Sigmoid colon (tissue), 7 donors: ENCODE measurements at regions of chr11 and their contacts with region 1.

Region 1: DNA sequence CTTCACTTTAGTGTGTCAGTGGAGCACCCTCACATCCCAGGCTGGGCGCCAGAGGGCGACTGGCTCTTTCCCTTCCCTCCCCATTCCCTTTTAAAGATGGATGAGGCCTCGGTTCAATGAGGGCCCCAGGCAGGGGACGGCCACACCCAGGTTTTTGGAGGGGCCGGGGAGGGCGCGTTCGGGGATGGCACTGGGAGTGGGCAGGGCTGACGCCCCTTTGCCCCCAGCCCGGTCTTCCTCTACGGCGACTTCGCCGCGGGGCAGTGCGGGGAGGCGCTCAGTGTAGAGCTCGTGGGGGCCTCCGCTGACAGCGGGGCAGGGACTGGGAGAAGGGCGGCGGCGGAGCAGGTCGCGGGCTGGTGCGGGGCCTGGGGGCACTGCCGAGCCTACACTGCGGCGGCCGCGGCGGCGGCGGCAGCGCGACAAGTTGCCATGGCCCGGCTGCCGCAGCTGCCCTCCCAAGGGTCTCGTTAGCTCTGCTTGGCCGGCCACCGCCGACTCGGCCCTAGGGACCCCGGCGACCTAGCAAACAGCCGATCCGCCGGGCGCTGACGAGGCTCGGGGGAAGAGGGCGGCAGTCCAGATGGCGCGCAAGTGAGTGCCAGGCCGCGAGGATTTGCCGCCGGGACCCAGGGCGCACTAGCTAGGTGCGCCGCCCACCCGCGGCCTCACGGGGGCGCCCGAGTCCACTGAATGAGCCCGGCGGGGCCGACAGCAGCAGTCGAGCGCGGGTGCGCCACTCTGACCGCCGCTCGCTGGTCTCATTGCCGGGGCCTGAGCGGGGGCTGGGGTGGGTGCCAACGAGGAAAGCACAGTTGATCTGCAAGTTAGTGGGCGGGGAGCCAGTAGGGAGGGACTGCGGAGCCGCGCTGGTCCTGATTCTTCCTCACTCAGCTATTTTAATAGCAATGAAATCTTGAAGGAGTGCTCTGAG is 92.7 kb downstream of the RRM1 start:
- DNase-seq: peak; percentile 97
- H3K4me3 ChIP-seq: peak overlapping the region; percentile 42 to 65 (median 55)
- H3K27ac ChIP-seq: peak overlapping the region; percentile 68 to 78 (median 76)
- H3K4me1 ChIP-seq: peaks cover 0 to 25% (median 12%) of the 10 kb centered on the region in 4 donors
- H3K27me3 ChIP-seq: no peaks in the 10 kb centered on the region
- CTCF ChIP-seq: peak; percentile 78 to 96 (median 80)
- EP300 ChIP-seq: no peak
- POLR2A ChIP-seq: no peak

Region 2: DNA sequence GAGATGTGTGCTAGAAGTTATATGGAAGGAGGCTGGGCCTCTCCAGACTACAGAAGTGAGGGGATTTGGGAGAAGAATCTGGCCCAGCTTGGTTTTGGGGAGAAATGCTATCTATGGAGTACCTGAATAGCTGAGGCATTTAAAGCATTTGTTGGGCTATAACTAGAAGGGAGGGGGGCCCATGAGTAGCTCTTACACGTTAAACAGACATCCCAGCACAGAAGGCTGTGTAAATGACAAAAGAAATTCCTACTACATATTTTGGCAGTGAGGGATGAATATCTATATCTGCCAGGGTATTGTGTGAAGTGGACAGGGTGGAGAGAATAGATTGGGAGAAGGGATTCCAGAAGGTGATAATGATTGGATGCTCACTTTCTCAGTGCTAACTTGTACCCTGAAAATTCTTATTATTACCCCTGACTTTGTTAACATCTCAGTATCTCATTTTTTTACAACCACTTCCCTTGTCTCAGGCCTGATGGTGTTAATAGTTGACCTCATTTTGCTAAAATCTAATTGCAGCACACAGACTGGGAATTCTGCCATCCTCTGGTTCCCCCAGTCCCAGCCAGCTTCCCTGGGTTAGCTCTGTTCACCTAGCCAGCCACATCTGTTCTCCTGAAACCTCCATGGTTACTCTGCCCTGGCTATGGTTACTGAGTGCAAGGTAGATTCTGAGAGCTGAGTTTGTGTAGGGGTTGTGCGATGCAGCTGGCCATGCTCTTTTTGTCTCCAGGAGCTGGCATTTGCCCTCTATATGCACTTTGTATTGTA is 121.5 kb before region 1 on chr11:
- intact Hi-C with region 1: no loop called
- DNase-seq: no peak
- H3K4me3 ChIP-seq: no peak overlapping the region
- H3K27ac ChIP-seq: peak overlapping the region in 3 of 4 donors; percentile 53 to 55 (median 55)
- H3K4me1 ChIP-seq: peaks cover 0 to 69% (median 56%) of the 10 kb centered on the region in 4 donors
- H3K27me3 ChIP-seq: no peaks in the 10 kb centered on the region
- CTCF ChIP-seq: no peak
- EP300 ChIP-seq: no peak
- POLR2A ChIP-seq: no peak

Region 3: DNA sequence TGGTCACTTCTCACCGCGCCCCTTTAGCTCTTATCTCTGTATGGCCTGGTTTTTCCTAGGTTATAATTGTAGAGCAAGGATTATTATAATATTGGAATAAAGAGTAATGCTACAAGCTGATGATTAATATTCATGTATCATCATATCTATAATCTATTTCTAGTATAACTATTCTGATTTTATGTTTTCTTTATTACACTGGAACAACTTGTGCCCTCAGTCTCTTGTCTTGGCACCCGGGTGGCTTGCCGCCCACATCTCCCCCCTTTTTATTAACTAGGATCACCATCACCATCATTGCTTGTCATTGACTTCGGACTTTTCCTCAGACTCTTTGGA is 306.1 kb after region 1 on chr11:
- intact Hi-C with region 1: loop called (anchors 1 kb)
- DNase-seq: no peak
- H3K4me3 ChIP-seq: no peak overlapping the region
- H3K27ac ChIP-seq: no peak overlapping the region
- H3K4me1 ChIP-seq: peaks cover 0 to 4% (median 0%) of the 10 kb centered on the region in 4 donors
- H3K27me3 ChIP-seq: no peaks in the 10 kb centered on the region
- CTCF ChIP-seq: no peak
- EP300 ChIP-seq: no peak
- POLR2A ChIP-seq: no peak

Region 4: GRCh38 chr11:4539603-4540219 is 352.4 kb after region 1 on chr11:
- intact Hi-C with region 1: loop called (anchors 2 kb)
- DNase-seq: no peak
- H3K4me3 ChIP-seq: no peak overlapping the region
- H3K27ac ChIP-seq: no peak overlapping the region
- H3K4me1 ChIP-seq: no peaks in the 10 kb centered on the region
- H3K27me3 ChIP-seq: no peaks in the 10 kb centered on the region
- CTCF ChIP-seq: peak in 3 of 4 experiments; percentile 31 to 58 (median 50)
- EP300 ChIP-seq: no peak
- POLR2A ChIP-seq: no peak

Region 5: GRCh38 chr11:4826425-4826824 is 639.1 kb after region 1 on chr11:
- intact Hi-C with region 1: loop called (anchors 2 kb)
- DNase-seq: no peak
- H3K4me3 ChIP-seq: no peak overlapping the region
- H3K27ac ChIP-seq: no peak overlapping the region
- H3K4me1 ChIP-seq: peaks cover 0 to 7% (median 5%) of the 10 kb centered on the region in 4 donors
- H3K27me3 ChIP-seq: no peaks in the 10 kb centered on the region
- CTCF ChIP-seq: peak; percentile 46 to 60 (median 58)
- EP300 ChIP-seq: no peak
- POLR2A ChIP-seq: no peak

Region 6: DNA sequence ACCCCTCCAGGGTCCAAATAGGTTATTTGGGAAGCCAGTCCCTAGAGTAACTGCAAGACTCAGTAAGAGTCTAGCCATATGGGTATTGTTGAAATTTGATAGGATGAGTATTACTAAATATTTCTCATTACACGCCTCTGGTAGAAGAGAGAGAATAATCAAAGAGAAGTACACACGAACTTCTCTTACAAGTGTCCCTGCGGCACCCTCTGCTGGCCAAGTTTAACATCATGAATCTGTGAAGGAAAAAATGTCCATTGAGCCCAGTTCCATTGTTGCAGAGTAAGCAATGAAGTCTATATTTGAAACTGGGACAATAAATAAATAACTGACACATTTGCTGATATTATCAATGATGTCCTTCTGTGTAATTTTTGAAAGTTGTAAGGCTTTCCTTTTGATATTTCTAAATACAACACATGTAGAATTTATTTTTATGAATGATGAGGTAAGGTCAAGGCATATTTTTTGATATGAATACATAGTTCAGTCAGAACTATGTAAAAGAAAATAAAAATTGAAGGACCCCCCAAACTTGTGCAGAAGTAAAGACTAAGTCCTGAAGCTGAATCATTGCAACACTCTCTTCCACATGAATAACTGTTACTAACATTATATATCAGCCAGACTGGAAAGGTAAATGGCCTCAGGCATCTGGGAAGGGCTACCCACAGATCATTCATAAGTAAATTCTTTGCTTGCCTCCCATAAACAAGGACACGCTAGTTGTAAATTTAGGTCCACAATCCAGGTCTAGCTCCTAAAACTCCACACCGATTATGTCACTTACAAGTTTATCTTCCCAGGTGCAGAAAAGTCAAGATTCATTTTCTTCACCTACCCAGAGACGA is 817.3 kb after region 1 on chr11:
- intact Hi-C with region 1: loop called (anchors 5 kb)
- DNase-seq: no peak
- H3K4me3 ChIP-seq: no peak overlapping the region
- H3K27ac ChIP-seq: no peak overlapping the region
- H3K4me1 ChIP-seq: no peaks in the 10 kb centered on the region
- H3K27me3 ChIP-seq: no peaks in the 10 kb centered on the region
- CTCF ChIP-seq: peak in 3 of 4 experiments; percentile 12 to 45 (median 31)
- EP300 ChIP-seq: no peak
- POLR2A ChIP-seq: no peak